ENCODE measurements at regions of chr9 and their contacts with region 1.

Region 1: DNA sequence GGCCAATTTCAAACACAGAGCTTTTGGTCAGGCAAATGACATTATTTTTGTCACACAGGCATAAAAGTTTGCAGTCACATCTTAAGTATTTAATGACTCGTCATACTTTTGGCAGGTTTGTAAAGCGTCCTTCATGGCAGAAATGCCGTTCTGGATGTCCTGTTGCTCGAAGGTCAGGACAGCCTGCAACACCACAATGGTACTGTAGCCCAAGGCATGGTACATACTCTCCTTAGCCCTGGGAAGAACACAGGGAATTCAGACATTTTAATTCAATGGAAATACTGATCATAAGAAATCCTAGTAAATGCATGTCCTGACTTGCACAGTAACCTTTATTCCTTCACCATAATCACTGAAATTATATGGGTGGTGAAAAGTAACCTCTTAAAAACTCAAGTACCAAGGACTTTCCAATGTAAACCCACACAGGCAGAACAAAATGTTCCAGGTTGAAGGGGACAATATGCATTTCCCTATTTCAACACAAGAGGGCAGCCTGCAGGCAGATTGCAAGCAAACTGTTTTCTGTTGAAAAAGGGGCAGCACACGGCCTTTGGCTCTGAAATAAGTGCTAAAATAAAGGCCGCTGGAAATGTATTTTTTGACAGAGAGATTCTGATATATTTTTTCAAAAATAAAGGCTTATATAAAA is 95.7 kb downstream of the TTC39B start:
- DNase-seq: no peak
- ATAC-seq: peak; percentile 49
- H3K4me3 Mint-ChIP-seq: no peak overlapping the region
- H3K27ac Mint-ChIP-seq: no peak overlapping the region
- H3K4me1 Mint-ChIP-seq: no peaks in the 10 kb centered on the region
- H3K27me3 Mint-ChIP-seq: no peaks in the 10 kb centered on the region
- CTCF ChIP-seq: peak; percentile 89

Region 2: GRCh38 chr9:15231788-15232635 is 20.7 kb after region 1 on chr9:
- CTCF ChIA-PET with region 1: interaction called, 6 read pairs
- POLR2A ChIA-PET with region 1: no interaction called
- intact Hi-C with region 1: loop called (anchors 1 kb)
- DNase-seq: no peak
- ATAC-seq: peak; percentile 56
- H3K4me3 Mint-ChIP-seq: no peak overlapping the region
- H3K27ac Mint-ChIP-seq: no peak overlapping the region
- H3K4me1 Mint-ChIP-seq: peaks cover 19% of the 10 kb centered on the region
- H3K27me3 Mint-ChIP-seq: no peaks in the 10 kb centered on the region
- CTCF ChIP-seq: no peak

Region 3: GRCh38 chr9:15271403-15271802 is 60.1 kb after region 1 on chr9:
- CTCF ChIA-PET with region 1: no interaction called
- POLR2A ChIA-PET with region 1: no interaction called
- intact Hi-C with region 1: no loop called
- DNase-seq: no peak
- ATAC-seq: no peak
- H3K4me3 Mint-ChIP-seq: no peak overlapping the region
- H3K27ac Mint-ChIP-seq: no peak overlapping the region
- H3K4me1 Mint-ChIP-seq: peaks cover 6% of the 10 kb centered on the region
- H3K27me3 Mint-ChIP-seq: no peaks in the 10 kb centered on the region
- CTCF ChIP-seq: no peak

Region 4: DNA sequence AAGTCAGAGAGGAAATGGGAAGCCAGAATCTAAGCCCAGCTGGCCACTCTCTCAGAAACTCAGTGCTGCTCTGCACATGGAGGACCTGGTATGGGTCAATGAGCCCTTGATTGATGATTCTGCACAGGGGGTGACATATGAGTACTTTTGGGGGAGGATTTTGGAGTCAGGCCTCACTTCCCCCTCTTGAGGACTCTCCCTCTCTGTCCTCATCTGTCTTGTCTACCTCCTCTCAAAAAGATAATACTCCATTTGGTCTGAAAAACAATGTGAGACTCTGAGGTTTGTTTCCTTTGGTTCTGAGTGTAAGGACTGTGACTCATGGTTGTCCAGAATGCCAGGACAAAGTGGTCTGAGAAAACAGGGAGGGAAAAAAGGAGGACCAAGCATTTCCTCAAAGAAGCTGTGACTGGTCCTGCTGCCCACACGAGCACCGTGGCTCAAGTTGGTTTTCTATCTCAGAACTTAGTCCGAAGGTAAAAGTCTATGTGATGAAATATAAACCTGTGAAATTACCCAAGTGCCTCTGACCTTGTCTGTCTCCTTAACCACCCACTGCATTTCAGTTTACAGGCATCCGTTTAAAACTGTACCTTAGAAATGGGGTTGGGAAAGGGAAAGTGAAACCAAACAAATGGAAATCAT is 84.6 kb after region 1 on chr9:
- CTCF ChIA-PET with region 1: no interaction called
- POLR2A ChIA-PET with region 1: no interaction called
- intact Hi-C with region 1: no loop called
- DNase-seq: no peak
- ATAC-seq: peak; percentile 32
- H3K4me3 Mint-ChIP-seq: peak overlapping the region; percentile 77
- H3K27ac Mint-ChIP-seq: peak overlapping the region; percentile 89
- H3K4me1 Mint-ChIP-seq: peaks cover 53% of the 10 kb centered on the region
- H3K27me3 Mint-ChIP-seq: no peaks in the 10 kb centered on the region
- CTCF ChIP-seq: no peak

Region 5: DNA sequence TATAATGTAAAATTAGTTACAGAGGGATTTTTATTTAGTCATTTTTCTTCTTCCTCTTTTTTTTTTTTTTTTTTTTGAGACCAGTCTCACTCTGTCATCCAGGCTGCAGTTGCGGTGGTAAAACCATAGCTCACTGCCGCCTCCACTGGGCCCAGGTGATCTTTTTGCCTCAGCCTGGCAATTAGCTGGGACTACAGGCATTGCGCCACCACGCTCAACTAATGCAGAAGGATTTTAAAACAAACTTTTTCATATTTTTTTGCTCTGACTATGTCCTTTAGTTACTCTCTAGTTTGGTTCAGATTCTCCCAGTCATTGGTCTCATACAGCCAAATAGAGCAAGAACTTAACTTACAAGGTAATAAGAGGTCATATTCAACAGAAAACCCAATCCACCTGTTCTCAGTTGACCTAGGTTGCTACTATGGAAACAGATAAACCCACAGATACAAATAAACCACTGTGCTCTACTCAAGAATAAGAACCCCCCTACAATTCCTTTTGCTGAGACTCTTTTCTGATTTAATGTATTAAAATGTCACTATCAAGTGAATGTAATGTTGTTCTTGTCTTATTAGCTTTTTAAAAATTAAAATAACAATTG is 145.9 kb after region 1 on chr9:
- CTCF ChIA-PET with region 1: interaction called, 4 read pairs
- POLR2A ChIA-PET with region 1: no interaction called
- intact Hi-C with region 1: loop called (anchors 1 kb)
- DNase-seq: no peak
- ATAC-seq: peak; percentile 87
- H3K4me3 Mint-ChIP-seq: no peak overlapping the region
- H3K27ac Mint-ChIP-seq: no peak overlapping the region
- H3K4me1 Mint-ChIP-seq: peaks cover 6% of the 10 kb centered on the region
- H3K27me3 Mint-ChIP-seq: no peaks in the 10 kb centered on the region
- CTCF ChIP-seq: no peak

Region 6: GRCh38 chr9:15389173-15389572 is 177.9 kb after region 1 on chr9:
- CTCF ChIA-PET with region 1: no interaction called
- POLR2A ChIA-PET with region 1: no interaction called
- intact Hi-C with region 1: no loop called
- DNase-seq: no peak
- ATAC-seq: no peak
- H3K4me3 Mint-ChIP-seq: no peak overlapping the region
- H3K27ac Mint-ChIP-seq: no peak overlapping the region
- H3K4me1 Mint-ChIP-seq: no peaks in the 10 kb centered on the region
- H3K27me3 Mint-ChIP-seq: peaks cover 1% of the 10 kb centered on the region
- CTCF ChIP-seq: no peak

Region 7: DNA sequence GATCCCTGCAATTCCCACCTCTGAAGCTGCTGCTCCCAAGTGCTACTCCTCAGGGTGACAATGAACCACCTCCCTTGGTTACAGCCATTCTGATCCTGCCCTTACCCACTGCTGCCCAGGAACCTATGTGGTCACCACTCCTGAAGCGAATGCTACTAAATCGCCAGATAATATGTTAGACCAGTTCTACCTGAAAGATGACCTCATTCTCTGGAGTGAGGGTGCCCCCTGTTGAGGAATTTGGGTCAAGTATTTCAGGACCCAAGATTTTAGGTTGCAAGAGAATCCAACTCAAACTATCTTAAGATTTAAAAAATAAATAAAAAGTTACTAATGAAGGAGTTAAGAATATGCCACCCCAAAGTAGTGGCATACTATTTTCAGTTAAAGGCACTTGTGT is 205.6 kb after region 1 on chr9:
- CTCF ChIA-PET with region 1: interaction called, 11 read pairs
- POLR2A ChIA-PET with region 1: no interaction called
- intact Hi-C with region 1: loop called (anchors 1 kb)
- DNase-seq: no peak
- ATAC-seq: peak; percentile 40
- H3K4me3 Mint-ChIP-seq: no peak overlapping the region
- H3K27ac Mint-ChIP-seq: no peak overlapping the region
- H3K4me1 Mint-ChIP-seq: no peaks in the 10 kb centered on the region
- H3K27me3 Mint-ChIP-seq: peaks cover 9% of the 10 kb centered on the region
- CTCF ChIP-seq: no peak

Region 8: GRCh38 chr9:15485836-15486666 is 274.8 kb after region 1 on chr9:
- CTCF ChIA-PET with region 1: no interaction called
- POLR2A ChIA-PET with region 1: no interaction called
- intact Hi-C with region 1: loop called (anchors 5 kb)
- DNase-seq: no peak
- ATAC-seq: no peak
- H3K4me3 Mint-ChIP-seq: no peak overlapping the region
- H3K27ac Mint-ChIP-seq: no peak overlapping the region
- H3K4me1 Mint-ChIP-seq: peaks cover 18% of the 10 kb centered on the region
- H3K27me3 Mint-ChIP-seq: no peaks in the 10 kb centered on the region
- CTCF ChIP-seq: no peak

Region 9: DNA sequence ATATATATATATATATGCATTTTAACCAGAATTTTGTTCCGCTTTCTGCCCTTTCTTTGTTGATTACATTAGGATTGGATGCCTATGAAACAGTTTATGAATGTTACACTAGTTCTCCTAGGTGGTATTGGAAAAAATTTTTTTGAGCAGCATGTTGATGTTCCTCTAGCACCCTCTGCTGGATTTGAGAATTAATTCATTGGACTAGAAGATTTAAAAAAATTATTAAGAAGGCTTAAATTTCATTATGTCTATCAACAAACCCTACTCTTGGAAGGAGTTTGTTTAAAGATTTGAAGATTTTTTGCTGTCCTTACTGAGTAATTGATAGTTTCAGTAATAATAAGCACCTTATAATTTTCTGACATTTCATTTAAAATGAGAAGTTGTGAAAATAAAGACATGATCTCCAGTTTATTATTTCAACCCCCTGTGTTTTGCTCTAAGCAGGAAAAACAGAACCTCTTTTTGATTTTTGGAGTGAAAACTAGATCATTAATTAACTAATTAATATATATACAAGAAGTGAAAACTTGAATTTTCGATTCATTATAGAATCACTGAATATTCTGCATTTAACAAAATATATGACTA is 431.2 kb after region 1 on chr9:
- CTCF ChIA-PET with region 1: no interaction called
- POLR2A ChIA-PET with region 1: no interaction called
- intact Hi-C with region 1: loop called (anchors 1 kb)
- DNase-seq: no peak
- ATAC-seq: no peak
- H3K4me3 Mint-ChIP-seq: no peak overlapping the region
- H3K27ac Mint-ChIP-seq: no peak overlapping the region
- H3K4me1 Mint-ChIP-seq: no peaks in the 10 kb centered on the region
- H3K27me3 Mint-ChIP-seq: no peaks in the 10 kb centered on the region
- CTCF ChIP-seq: no peak